H1 (cell line): ENCODE measurements at regions of chr7 and their contacts with region 1.

Region 1: GRCh38 chr7:36986429-36987362 is 262.4 kb upstream of the AOAH start:
- DNase-seq: peak; percentile 41 to 90
- H3K4me3 ChIP-seq: peak overlapping the region in 1 of 4 experiments; percentile 21; a peak in 1 of 8 replicates
- H3K27ac ChIP-seq: peak overlapping the region; percentile 72
- H3K4me1 ChIP-seq: peaks cover 0 to 14% (median 0%) of the 10 kb centered on the region in 4 experiments; a peak in 3 of 7 replicates
- H3K27me3 ChIP-seq: no peaks in the 10 kb centered on the region
- CTCF ChIP-seq: peak; percentile 75 to 91 (median 88)
- EP300 ChIP-seq: peak in 1 of 2 experiments; percentile 53; a peak in 1 of 3 replicates
- POLR2A ChIP-seq: no peak
- RAD21 ChIP-seq: peak; percentile 71 to 81

Region 2: GRCh38 chr7:36962367-36962766 is 24.3 kb before region 1 on chr7:
- CTCF ChIA-PET with region 1: interaction called, 71 read pairs
- POLR2A ChIA-PET with region 1: no interaction called
- DNase-seq: no peak
- H3K4me3 ChIP-seq: no peak overlapping the region; a peak in 1 of 8 replicates
- H3K27ac ChIP-seq: no peak overlapping the region
- H3K4me1 ChIP-seq: peaks cover 0 to 7% (median 2%) of the 10 kb centered on the region in 4 experiments; a peak in 4 of 7 replicates
- H3K27me3 ChIP-seq: no peaks in the 10 kb centered on the region
- CTCF ChIP-seq: no peak
- EP300 ChIP-seq: no peak
- POLR2A ChIP-seq: no peak
- RAD21 ChIP-seq: no peak

Region 3: DNA sequence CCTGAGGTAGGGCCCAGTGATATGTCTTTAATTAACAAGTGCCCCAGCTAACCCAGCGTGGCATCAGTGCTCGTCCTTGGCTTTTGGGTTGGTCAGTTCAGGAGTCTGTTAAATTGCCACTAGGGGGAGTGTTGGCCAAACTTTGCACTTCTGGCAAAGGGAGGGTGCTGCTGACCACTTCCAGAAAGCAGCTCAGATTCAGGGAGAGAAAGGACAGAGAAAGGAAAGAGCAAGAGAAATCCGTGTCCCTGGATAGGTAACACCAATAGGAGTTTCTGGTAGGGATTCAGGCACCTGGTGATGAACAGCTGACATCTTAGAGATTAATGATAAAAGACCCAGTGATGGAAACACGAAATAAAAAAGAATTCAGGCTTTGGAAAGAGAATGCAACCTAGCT is 19.3 kb before region 1 on chr7:
- CTCF ChIA-PET with region 1: interaction called, 71 read pairs
- POLR2A ChIA-PET with region 1: interaction called, 3 read pairs
- DNase-seq: peak in 1 of 2 experiments; percentile 47
- H3K4me3 ChIP-seq: no peak overlapping the region
- H3K27ac ChIP-seq: no peak overlapping the region
- H3K4me1 ChIP-seq: peaks cover 0 to 6% (median 2%) of the 10 kb centered on the region in 4 experiments; a peak in 4 of 7 replicates
- H3K27me3 ChIP-seq: no peaks in the 10 kb centered on the region
- CTCF ChIP-seq: peak; percentile 69 to 89 (median 85)
- EP300 ChIP-seq: no peak
- POLR2A ChIP-seq: no peak
- RAD21 ChIP-seq: peak; percentile 83 to 89

Region 4: GRCh38 chr7:37016064-37016878 is 29.6 kb after region 1 on chr7:
- CTCF ChIA-PET with region 1: interaction called, 162 read pairs
- POLR2A ChIA-PET with region 1: no interaction called
- DNase-seq: no peak
- H3K4me3 ChIP-seq: no peak overlapping the region
- H3K27ac ChIP-seq: no peak overlapping the region
- H3K4me1 ChIP-seq: no peaks in the 10 kb centered on the region
- H3K27me3 ChIP-seq: no peaks in the 10 kb centered on the region
- CTCF ChIP-seq: no peak
- EP300 ChIP-seq: no peak
- POLR2A ChIP-seq: no peak
- RAD21 ChIP-seq: no peak